ENCODE measurements at regions of chr1 and their contacts with region 1.

Region 1: DNA sequence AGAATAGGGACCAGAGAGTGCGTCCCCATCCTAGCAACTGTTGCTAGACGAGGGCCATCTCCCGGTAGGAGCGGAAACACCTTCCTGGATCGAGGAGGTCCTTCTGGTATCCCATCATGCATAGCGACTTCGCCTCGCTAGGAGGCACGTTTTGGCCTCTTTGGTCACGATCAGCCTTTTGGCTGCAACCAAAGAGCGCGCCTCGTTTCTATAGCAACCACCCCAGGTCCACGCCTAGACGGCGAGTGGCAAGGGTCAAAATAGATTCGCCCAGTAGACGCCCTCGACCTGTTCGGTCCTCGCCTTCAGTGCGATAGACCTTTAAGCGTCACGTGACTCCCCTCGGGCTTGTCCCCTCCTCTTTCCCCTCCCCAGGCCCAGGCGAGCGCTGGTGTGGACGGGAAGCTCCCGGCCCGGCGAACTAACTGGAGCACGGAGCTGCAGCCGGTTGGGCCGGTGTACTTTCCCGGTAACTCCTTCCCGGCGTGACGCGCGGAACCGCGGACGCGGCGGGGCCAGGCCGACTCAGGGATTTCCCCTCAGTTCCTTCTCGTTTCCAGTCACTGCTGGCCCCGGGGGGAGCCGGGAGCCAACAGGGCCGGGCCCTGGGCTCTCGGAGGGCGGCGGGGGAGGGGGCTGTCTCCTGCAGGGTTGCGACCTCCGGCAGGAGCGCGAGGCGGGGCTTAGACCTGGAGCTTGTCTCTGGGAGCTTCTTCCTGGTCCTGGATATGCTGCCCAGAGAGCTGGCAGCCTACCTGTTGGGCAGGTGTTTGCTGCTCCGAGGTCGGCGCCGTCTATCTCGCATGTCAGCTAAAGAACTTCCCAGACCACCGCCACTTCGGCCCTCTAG is at the start of gene DNAJC16:
- DNase-seq: peak; percentile 98
- ATAC-seq: peak; percentile 57
- H3K4me3 Mint-ChIP-seq: peak within 1 kb of the TSS; percentile 84
- H3K27ac Mint-ChIP-seq: peak within 1 kb of the TSS; percentile 88
- H3K4me1 Mint-ChIP-seq: peaks cover 53% of the 10 kb centered on the region
- H3K27me3 Mint-ChIP-seq: no peaks in the 10 kb centered on the region
- total RNA-seq, gene DNAJC16: 10.9 to 14.1 TPM

Region 2: GRCh38 chr1:13730751-13731482 is 1795.8 kb before region 1 on chr1:
- CTCF ChIA-PET with region 1: no interaction called
- POLR2A ChIA-PET with region 1: no interaction called
- intact Hi-C with region 1: loop called in 1 of 2 experiments (anchors 10 kb)
- DNase-seq: peak; percentile 90
- ATAC-seq: peak; percentile 97
- H3K4me3 Mint-ChIP-seq: peak overlapping the region; percentile 82
- H3K27ac Mint-ChIP-seq: peak overlapping the region; percentile 97
- H3K4me1 Mint-ChIP-seq: peaks cover 63% of the 10 kb centered on the region
- H3K27me3 Mint-ChIP-seq: no peaks in the 10 kb centered on the region

Region 3: GRCh38 chr1:15578921-15579682 is 52.4 kb after region 1 on chr1:
- CTCF ChIA-PET with region 1: interaction called, 3 read pairs
- POLR2A ChIA-PET with region 1: no interaction called
- intact Hi-C with region 1: loop called (anchors 1 to 5 kb)
- DNase-seq: peak; percentile 55
- ATAC-seq: peak; percentile 77
- H3K4me3 Mint-ChIP-seq: peak overlapping the region; percentile 32
- H3K27ac Mint-ChIP-seq: peak overlapping the region; percentile 90
- H3K4me1 Mint-ChIP-seq: peaks cover 45% of the 10 kb centered on the region
- H3K27me3 Mint-ChIP-seq: no peaks in the 10 kb centered on the region

Region 4: DNA sequence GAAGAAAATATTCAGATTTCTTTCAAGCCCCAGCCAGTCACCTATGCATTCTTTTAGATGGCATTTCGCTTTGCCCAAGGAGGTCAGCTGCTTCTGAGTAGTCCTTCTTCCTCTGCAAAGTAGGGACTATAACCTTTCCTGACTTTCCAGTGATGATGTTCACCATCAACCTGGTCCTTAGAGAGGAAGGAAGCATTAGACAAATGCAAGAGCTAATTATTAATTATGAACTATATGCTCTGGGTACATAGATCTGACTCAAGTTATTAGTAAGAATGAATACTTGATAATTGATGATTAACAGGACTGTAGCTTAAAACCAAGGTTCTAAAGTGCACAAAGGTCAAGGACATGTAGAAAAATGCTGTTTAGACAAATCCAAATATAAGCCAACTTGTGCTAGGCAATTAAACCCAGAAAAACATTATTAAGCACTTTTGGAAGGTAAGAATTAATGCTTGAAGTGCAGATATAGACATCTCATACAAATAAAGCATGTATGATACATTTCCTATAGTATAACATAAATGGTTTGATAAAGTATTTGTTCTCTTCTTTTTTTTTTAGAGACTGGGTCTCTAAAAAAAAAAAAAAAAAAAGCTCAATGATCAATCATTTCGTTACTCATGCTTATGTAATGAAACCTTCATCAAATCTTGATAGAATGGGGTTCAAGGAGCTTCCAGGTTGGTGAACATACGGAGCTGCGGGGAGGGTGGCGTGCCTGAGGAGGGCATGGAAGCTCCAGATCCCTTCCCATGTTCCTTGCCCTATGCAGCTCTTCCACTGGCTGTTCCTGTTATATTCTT is 69.3 kb after region 1 on chr1:
- CTCF ChIA-PET with region 1: no interaction called
- POLR2A ChIA-PET with region 1: no interaction called
- intact Hi-C with region 1: no loop called
- DNase-seq: no peak
- ATAC-seq: no peak
- H3K4me3 Mint-ChIP-seq: no peak overlapping the region
- H3K27ac Mint-ChIP-seq: no peak overlapping the region
- H3K4me1 Mint-ChIP-seq: no peaks in the 10 kb centered on the region
- H3K27me3 Mint-ChIP-seq: no peaks in the 10 kb centered on the region

Region 5: GRCh38 chr1:15617175-15617880 is 90.6 kb after region 1 on chr1 and contains the start of gene DDI2:
- CTCF ChIA-PET with region 1: no interaction called
- POLR2A ChIA-PET with region 1: interaction called, 3 read pairs
- intact Hi-C with region 1: loop called (anchors 1 kb)
- DNase-seq: peak; percentile 98
- ATAC-seq: peak; percentile 89
- H3K4me3 Mint-ChIP-seq: peak within 1 kb of the TSS; percentile 94
- H3K27ac Mint-ChIP-seq: peak within 1 kb of the TSS; percentile 95
- H3K4me1 Mint-ChIP-seq: peaks cover 45% of the 10 kb centered on the region
- H3K27me3 Mint-ChIP-seq: no peaks in the 10 kb centered on the region
- total RNA-seq, gene DDI2: 30.2 to 34.0 TPM

Region 6: GRCh38 chr1:15835741-15836510 is 309.2 kb after region 1 on chr1:
- CTCF ChIA-PET with region 1: no interaction called
- POLR2A ChIA-PET with region 1: no interaction called
- intact Hi-C with region 1: loop called (anchors 1 to 2 kb)
- DNase-seq: peak; percentile 100
- ATAC-seq: peak; percentile 59
- H3K4me3 Mint-ChIP-seq: peak overlapping the region; percentile 90
- H3K27ac Mint-ChIP-seq: peak overlapping the region; percentile 98
- H3K4me1 Mint-ChIP-seq: peaks cover 22% of the 10 kb centered on the region
- H3K27me3 Mint-ChIP-seq: no peaks in the 10 kb centered on the region

Region 7: GRCh38 chr1:15975805-15976680 is 449.3 kb after region 1 on chr1 and contains the start of gene ZBTB17:
- CTCF ChIA-PET with region 1: no interaction called
- POLR2A ChIA-PET with region 1: no interaction called
- intact Hi-C with region 1: loop called in 1 of 2 experiments (anchors 2 kb)
- DNase-seq: peak; percentile 98
- ATAC-seq: peak; percentile 89
- H3K4me3 Mint-ChIP-seq: peak within 1 kb of the TSS; percentile 85
- H3K27ac Mint-ChIP-seq: peak within 1 kb of the TSS; percentile 93
- H3K4me1 Mint-ChIP-seq: peaks cover 42% of the 10 kb centered on the region
- H3K27me3 Mint-ChIP-seq: no peaks in the 10 kb centered on the region
- total RNA-seq, gene ZBTB17: 47.7 to 48.3 TPM

Region 8: GRCh38 chr1:16440470-16441281 is 914.0 kb after region 1 on chr1 and contains the start of gene NECAP2:
- CTCF ChIA-PET with region 1: no interaction called
- POLR2A ChIA-PET with region 1: no interaction called
- intact Hi-C with region 1: loop called in 1 of 2 experiments (anchors 5 kb)
- DNase-seq: peak; percentile 97
- ATAC-seq: peak; percentile 91
- H3K4me3 Mint-ChIP-seq: peak within 1 kb of the TSS; percentile 81
- H3K27ac Mint-ChIP-seq: peak within 1 kb of the TSS; percentile 96
- H3K4me1 Mint-ChIP-seq: peaks cover 36% of the 10 kb centered on the region
- H3K27me3 Mint-ChIP-seq: no peaks in the 10 kb centered on the region
- total RNA-seq, gene NECAP2: 46.5 to 54.2 TPM